CD14-positive monocyte (primary cell): ENCODE measurements at regions of chr1 and their contacts with region 1.

Region 1: DNA sequence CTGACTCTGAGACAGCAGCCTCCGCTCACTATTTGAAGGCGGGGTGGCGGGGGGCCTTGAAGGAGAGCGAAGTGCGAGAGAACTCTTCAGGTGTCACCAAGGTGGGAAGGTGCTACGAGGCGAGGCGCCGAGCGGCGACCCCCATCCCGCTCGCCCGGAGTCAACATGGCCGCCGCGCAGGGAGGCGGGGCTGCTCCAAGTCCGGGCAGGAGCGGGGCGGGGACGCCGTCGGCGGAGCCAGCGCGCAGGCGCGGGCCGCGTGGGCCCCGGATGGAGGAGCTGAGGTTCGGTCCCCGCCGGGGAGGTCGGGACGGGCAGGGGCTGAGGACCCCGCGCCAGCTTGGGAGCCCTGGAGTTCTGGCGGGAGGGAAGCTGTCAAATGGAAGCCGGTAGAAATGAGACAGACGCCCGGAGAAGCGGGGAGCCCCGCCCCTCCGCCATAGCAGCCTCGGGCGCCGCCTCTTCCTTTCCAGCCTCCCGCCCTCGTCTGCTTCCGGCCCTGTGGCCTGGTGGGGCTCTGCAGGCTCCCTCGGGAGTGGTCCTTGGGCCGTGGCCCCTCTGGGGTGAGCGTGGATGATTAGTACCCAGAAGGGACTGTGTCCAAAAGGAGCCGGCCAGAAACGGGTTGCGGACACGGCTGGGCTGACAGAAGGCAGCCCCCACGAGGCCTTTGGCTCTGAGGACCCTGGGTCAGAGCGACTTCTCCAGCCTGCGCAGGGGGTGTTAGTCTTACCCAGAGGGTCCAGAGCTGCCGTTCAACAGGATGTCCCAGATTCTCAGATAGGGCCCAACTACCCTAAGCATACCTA is at the start of gene PIGV:
- DNase-seq: peak; percentile 66 to 80 (median 75)
- H3K4me3 ChIP-seq: peak within 1 kb of the TSS; percentile 71 to 97 (median 90)
- H3K4me3 Mint-ChIP-seq: peak within 1 kb of the TSS; percentile 97 to 98
- H3K27ac ChIP-seq: peak within 1 kb of the TSS; percentile 91 to 97
- H3K27ac Mint-ChIP-seq: peak within 1 kb of the TSS; percentile 95 to 99 (median 99)
- H3K4me1 ChIP-seq: peaks cover 51 to 60% of the 10 kb centered on the region in 2 donors
- H3K4me1 Mint-ChIP-seq: peaks cover 61% of the 10 kb centered on the region
- H3K27me3 ChIP-seq: no peaks in the 10 kb centered on the region
- H3K27me3 Mint-ChIP-seq: peaks cover 0 to 2% (median 0%) of the 10 kb centered on the region in 3 donors
- CTCF ChIP-seq: no peak
- polyA plus RNA-seq, gene PIGV: 5.7 to 9.5 (median 8.3) TPM

Region 2: GRCh38 chr1:26450908-26451307 is 337.0 kb before region 1 on chr1:
- intact Hi-C with region 1: no loop called
- DNase-seq: no peak
- H3K4me3 ChIP-seq: no peak overlapping the region
- H3K4me3 Mint-ChIP-seq: no peak overlapping the region
- H3K27ac ChIP-seq: no peak overlapping the region
- H3K27ac Mint-ChIP-seq: no peak overlapping the region
- H3K4me1 ChIP-seq: no peaks in the 10 kb centered on the region
- H3K4me1 Mint-ChIP-seq: no peaks in the 10 kb centered on the region
- H3K27me3 ChIP-seq: no peaks in the 10 kb centered on the region
- H3K27me3 Mint-ChIP-seq: peaks cover 0 to 2% (median 0%) of the 10 kb centered on the region in 3 donors
- CTCF ChIP-seq: no peak

Region 3: DNA sequence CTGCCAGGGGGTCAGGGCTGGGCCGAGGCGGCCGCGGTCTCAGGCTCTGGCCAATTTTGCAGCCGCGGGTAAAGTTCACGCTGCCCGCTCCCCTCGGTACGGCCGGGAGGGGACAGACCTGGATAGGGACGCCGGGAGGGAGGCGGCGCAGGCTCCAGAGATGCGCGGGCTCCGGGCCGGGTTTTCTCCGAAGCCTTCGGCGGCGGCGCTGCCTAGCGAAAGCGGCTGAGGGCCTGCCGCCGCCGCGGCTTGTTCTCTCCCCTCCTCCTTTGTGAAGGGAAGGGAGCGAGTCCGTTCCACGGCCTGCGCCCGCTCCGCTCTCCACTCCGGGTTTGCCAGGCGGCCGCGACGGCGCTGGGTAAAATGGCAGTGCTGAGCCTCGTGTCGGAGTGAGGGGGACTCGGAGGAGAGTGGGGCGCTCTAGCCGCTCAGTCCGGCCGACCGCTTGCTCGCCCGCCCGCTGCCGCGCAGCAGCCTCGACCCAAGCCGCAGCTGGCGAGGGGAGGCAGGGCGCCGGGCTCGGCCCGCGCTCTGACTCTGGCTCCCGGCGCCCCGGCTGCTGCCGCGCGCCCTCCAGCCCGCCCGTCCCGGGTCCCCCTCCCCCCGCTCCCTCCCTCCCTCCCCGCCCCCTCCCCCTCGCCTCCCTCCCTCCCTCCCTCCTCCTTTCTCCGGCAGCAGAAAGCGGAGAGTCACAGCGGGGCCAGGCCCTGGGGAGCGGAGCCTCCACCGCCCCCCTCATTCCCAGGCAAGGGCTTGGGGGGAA is 92.4 kb before region 1 on chr1 and contains the start of gene ARID1A:
- intact Hi-C with region 1: loop called (anchors 2 to 5 kb)
- DNase-seq: peak; percentile 90 to 95 (median 91)
- H3K4me3 ChIP-seq: peak within 1 kb of the TSS; percentile 63 to 89 (median 85)
- H3K4me3 Mint-ChIP-seq: peak within 1 kb of the TSS; percentile 82 to 90
- H3K27ac ChIP-seq: peak within 1 kb of the TSS; percentile 62 to 90
- H3K27ac Mint-ChIP-seq: peak within 1 kb of the TSS; percentile 79 to 94 (median 82)
- H3K4me1 ChIP-seq: peaks cover 55 to 65% of the 10 kb centered on the region in 2 donors
- H3K4me1 Mint-ChIP-seq: peaks cover 38% of the 10 kb centered on the region
- H3K27me3 ChIP-seq: no peaks in the 10 kb centered on the region
- H3K27me3 Mint-ChIP-seq: no peaks in the 10 kb centered on the region
- CTCF ChIP-seq: no peak
- polyA plus RNA-seq, gene ARID1A: 6.6 to 84.4 (median 9.5) TPM

Region 4: GRCh38 chr1:26744075-26744959 is 43.6 kb before region 1 on chr1:
- intact Hi-C with region 1: loop called in 1 of 2 experiments (anchors 5 kb)
- DNase-seq: peak; percentile 87 to 95 (median 92)
- H3K4me3 ChIP-seq: peak overlapping the region in 2 of 3 experiments; percentile 34 to 66
- H3K4me3 Mint-ChIP-seq: peak overlapping the region; percentile 47 to 80
- H3K27ac ChIP-seq: peak overlapping the region; percentile 37 to 89
- H3K27ac Mint-ChIP-seq: peak overlapping the region; percentile 84 to 95 (median 92)
- H3K4me1 ChIP-seq: peaks cover 35 to 57% of the 10 kb centered on the region in 2 donors
- H3K4me1 Mint-ChIP-seq: peaks cover 56% of the 10 kb centered on the region
- H3K27me3 ChIP-seq: no peaks in the 10 kb centered on the region
- H3K27me3 Mint-ChIP-seq: no peaks in the 10 kb centered on the region
- CTCF ChIP-seq: no peak